A549 (cell line): ENCODE measurements at regions of chr3 and their contacts with region 1.

Region 1: GRCh38 chr3:35965908-35966307 is 326.6 kb downstream of the ARPP21 start:
- DNase-seq: peak; percentile 7 to 49
- ATAC-seq: peak; percentile 78 to 82; a peak in 5 of 6 replicates
- H3K4me3 ChIP-seq: no peak overlapping the region
- H3K27ac ChIP-seq: no peak overlapping the region
- H3K4me1 ChIP-seq: no peaks in the 10 kb centered on the region
- CTCF ChIP-seq: peak; percentile 82
- EP300 ChIP-seq: no peak
- POLR2A ChIP-seq: no peak
- RAD21 ChIP-seq: peak; percentile 80 to 89

Region 2: DNA sequence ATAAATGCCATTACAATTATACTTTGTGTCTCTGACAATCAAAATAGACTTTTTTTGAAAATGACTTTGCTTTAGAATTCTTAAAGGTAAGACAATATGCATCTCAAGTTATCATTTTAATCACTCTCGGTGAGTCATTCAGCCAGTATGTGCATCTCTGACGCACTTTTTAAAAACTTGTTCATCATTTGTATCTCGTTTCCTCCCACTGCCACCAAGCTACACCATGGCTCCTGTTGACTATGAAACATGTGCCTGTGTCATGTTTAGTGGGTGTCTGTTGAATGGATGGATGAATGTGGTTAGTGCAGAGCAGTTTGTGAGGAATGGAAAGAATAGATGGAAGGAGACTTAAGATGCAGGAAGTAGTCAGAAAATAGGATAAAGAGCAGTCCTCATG is 258.0 kb before region 1 on chr3:
- CTCF ChIA-PET with region 1: no interaction called
- POLR2A ChIA-PET with region 1: no interaction called
- DNase-seq: peak in 1 of 2 experiments; percentile 4
- ATAC-seq: no peak
- H3K4me3 ChIP-seq: no peak overlapping the region
- H3K27ac ChIP-seq: no peak overlapping the region
- H3K4me1 ChIP-seq: no peaks in the 10 kb centered on the region
- CTCF ChIP-seq: no peak
- EP300 ChIP-seq: no peak
- POLR2A ChIP-seq: no peak
- RAD21 ChIP-seq: no peak

Region 3: DNA sequence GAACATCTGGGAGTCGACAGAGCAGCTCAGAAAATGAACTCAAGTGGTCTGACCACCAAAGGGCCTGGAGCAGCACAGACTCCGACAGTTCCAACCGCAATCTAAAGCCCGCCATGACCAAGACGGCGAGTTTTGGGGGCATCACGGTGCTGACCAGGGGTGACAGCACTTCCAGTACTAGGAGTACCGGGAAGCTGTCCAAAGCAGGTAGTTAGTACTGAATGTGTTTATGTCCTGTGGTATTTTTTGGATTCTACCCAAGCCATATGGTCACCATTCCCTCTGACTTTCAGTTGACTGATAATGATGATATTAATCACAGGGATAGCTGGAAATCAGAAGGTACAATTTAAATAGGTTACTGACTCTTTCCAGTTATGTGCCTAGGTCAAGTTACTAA is 244.3 kb before region 1 on chr3:
- CTCF ChIA-PET with region 1: no interaction called
- POLR2A ChIA-PET with region 1: no interaction called
- DNase-seq: no peak
- ATAC-seq: no peak
- H3K4me3 ChIP-seq: no peak overlapping the region
- H3K27ac ChIP-seq: no peak overlapping the region
- H3K4me1 ChIP-seq: 0 out of 3 replicates have a peak, but pooled peaks cover 1% of the 10 kb centered on the region
- CTCF ChIP-seq: no peak
- EP300 ChIP-seq: no peak
- POLR2A ChIP-seq: no peak
- RAD21 ChIP-seq: no peak

Region 4: GRCh38 chr3:35954413-35954812 is 11.5 kb before region 1 on chr3:
- CTCF ChIA-PET with region 1: interaction called, 14 read pairs
- POLR2A ChIA-PET with region 1: no interaction called
- DNase-seq: no peak
- ATAC-seq: no peak
- H3K4me3 ChIP-seq: no peak overlapping the region
- H3K27ac ChIP-seq: no peak overlapping the region
- H3K4me1 ChIP-seq: no peaks in the 10 kb centered on the region
- CTCF ChIP-seq: no peak
- EP300 ChIP-seq: no peak
- POLR2A ChIP-seq: no peak
- RAD21 ChIP-seq: no peak

Region 5: DNA sequence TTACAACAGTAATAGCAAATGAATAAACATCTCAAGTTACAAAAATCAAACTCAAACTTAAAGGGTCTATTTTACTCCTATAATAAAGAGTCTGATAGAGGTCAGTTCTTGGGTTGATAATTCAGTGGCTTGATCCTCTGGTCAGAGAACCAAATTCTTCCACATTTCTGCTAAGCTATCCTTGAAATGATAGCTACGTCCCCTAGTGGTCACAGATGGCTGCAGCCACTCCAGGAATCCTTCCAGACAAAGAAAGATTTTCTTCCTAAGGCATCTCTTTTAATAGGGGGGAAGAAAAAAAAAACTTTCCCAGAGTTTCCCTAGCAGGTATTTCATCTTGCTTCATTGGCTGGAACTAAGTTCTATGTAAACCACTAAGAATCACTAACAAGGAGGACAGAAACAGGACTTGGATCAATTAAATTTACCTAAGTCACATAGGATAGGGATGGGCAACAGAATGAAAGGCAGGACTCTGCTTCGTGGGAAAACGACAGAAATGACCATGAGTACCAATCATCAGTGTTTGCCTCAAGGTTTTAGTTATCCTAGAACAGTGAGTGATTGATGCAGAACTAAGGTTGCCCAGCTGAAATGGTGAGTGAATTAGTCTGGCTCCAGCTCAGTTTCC is 575.1 kb after region 1 on chr3:
- CTCF ChIA-PET with region 1: interaction called, 13 read pairs
- POLR2A ChIA-PET with region 1: no interaction called
- DNase-seq: peak; percentile 23 to 35
- ATAC-seq: peak; percentile 54 to 80; a peak in 4 of 6 replicates
- H3K4me3 ChIP-seq: no peak overlapping the region
- H3K27ac ChIP-seq: no peak overlapping the region
- H3K4me1 ChIP-seq: no peaks in the 10 kb centered on the region
- CTCF ChIP-seq: peak; percentile 77
- EP300 ChIP-seq: no peak
- POLR2A ChIP-seq: no peak
- RAD21 ChIP-seq: peak; percentile 69 to 74

Region 6: DNA sequence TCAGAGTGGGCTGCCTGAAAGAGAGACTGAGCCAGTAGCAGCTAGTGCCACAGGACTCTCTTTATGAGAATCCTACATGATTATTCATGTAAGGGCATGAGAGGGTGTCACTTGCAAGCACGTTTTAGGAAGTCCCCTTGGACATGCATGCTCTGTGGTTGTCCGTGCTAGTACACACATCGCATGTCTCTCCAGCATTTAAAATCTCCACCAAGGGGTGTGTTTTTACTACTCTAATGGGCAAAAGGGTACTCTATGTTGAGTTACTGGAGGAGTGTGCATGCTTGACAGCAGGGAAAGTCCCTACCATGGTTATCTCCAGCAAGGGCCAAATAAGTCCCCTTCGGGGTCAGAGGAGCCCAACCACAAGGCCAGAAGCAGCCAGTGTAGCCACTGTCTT is 727.8 kb after region 1 on chr3:
- CTCF ChIA-PET with region 1: interaction called, 91 read pairs
- POLR2A ChIA-PET with region 1: no interaction called
- DNase-seq: no peak
- ATAC-seq: no peak
- H3K4me3 ChIP-seq: no peak overlapping the region
- H3K27ac ChIP-seq: no peak overlapping the region
- H3K4me1 ChIP-seq: no peaks in the 10 kb centered on the region
- CTCF ChIP-seq: no peak
- EP300 ChIP-seq: no peak
- POLR2A ChIP-seq: no peak
- RAD21 ChIP-seq: no peak

Region 7: GRCh38 chr3:36700537-36701248 is 734.8 kb after region 1 on chr3:
- CTCF ChIA-PET with region 1: interaction called, 91 read pairs
- POLR2A ChIA-PET with region 1: no interaction called
- DNase-seq: peak; percentile 47 to 72
- ATAC-seq: peak; percentile 87 to 93
- H3K4me3 ChIP-seq: no peak overlapping the region
- H3K27ac ChIP-seq: peak overlapping the region in 1 of 2 experiments; percentile 49; a peak in 1 of 6 replicates
- H3K4me1 ChIP-seq: peaks cover 13% of the 10 kb centered on the region
- CTCF ChIP-seq: peak; percentile 93
- EP300 ChIP-seq: no peak
- POLR2A ChIP-seq: no peak
- RAD21 ChIP-seq: peak; percentile 99

Region 8: DNA sequence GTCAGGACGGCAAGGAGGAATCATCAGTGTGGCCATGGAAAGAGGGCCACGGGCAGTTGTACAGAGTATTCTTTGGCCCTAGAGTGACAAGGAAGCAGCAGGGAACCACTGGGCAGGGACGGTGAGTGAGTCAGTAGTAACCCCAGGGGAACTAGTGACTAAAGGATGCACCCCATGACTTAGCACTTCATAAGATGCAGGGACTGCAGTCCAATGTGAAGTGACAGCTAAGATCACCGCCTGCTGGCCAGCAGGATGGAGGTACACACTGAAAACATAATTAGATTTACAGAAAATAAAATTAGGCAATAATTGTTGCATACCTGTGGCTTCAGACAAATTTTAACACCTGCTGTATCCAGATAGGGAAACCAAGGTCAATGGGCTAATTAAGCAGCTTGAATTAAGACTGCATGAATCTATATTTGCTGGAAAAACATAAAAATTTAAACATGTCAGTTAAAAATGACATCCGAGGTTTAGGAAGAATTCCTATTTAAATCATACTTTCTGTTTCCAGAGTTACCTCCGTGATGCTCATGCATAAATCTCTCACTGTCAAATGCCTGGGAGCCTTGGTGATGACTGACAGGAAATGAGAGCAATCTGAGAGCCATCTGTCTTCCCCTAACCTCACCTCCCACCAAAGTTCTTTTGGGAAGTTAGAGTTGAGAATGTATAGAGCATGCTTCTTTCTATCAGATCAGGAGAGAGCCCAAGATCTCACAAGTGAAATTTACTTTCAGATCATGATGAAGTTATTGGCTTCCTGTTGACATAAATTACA is 741.9 kb after region 1 on chr3:
- CTCF ChIA-PET with region 1: interaction called, 51 read pairs
- POLR2A ChIA-PET with region 1: no interaction called
- DNase-seq: peak; percentile 90 to 93
- ATAC-seq: peak; percentile 96 to 99
- H3K4me3 ChIP-seq: no peak overlapping the region
- H3K27ac ChIP-seq: peak overlapping the region; percentile 73 to 81
- H3K4me1 ChIP-seq: peaks cover 18% of the 10 kb centered on the region
- CTCF ChIP-seq: peak; percentile 72
- EP300 ChIP-seq: peak in 1 of 2 experiments; percentile 20; a peak in 2 of 5 replicates
- POLR2A ChIP-seq: no peak
- RAD21 ChIP-seq: peak; percentile 84